GM23248 (cell line): ENCODE measurements at regions of chr11 and their contacts with region 1.

Region 1: GRCh38 chr11:8006349-8006977 is 19.3 kb downstream of the EIF3F start:
- DNase-seq: peak; percentile 84
- H3K4me3 ChIP-seq: no peak overlapping the region
- H3K27ac ChIP-seq: no peak overlapping the region
- H3K4me1 ChIP-seq: peaks cover 5% of the 10 kb centered on the region
- H3K27me3 ChIP-seq: no peaks in the 10 kb centered on the region

Region 2: DNA sequence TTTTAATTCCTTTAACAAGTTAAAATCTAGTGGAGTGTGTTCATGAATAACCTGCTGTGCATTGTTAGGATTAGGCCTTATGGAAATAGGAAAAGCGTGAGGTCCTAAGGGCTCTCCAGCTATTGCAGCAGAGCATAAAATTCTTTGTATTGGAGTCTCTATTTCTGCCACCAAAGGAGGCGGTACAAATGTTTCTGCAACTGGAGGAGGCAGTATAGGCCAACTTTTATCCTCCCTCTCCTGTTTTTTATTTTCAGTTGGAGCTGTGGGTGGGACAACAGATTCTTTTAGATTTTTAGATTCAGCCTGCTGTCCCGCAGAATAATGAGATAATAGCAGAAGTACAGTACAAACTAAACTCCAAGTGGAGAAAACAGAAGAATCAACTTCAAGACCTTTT is 101.5 kb before region 1 on chr11:
- in situ Hi-C with region 1: no loop called
- DNase-seq: peak; percentile 75
- H3K4me3 ChIP-seq: peak overlapping the region; percentile 34
- H3K27ac ChIP-seq: peak overlapping the region; percentile 31
- H3K4me1 ChIP-seq: peaks cover 54% of the 10 kb centered on the region
- H3K27me3 ChIP-seq: no peaks in the 10 kb centered on the region

Region 3: DNA sequence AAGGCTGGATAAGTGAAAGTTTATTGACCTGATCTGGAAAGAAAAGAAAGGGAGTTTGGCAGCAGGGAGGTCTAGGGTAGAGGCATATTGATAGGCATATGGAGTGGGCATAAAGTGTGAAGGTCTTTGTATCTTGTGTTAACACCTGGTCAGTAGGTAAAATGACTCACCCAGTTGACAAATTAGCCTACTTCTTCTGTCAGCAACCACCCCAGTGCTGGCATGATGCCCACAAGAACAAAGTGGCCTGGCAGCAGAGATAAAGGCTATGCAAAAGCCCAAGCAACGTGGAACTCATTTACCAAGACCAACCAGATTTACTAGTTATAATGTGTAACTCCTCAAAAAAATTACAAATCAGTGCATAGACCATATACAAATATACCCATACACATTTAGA is 69.8 kb before region 1 on chr11:
- in situ Hi-C with region 1: no loop called
- DNase-seq: no peak
- H3K4me3 ChIP-seq: no peak overlapping the region
- H3K27ac ChIP-seq: no peak overlapping the region
- H3K4me1 ChIP-seq: no peaks in the 10 kb centered on the region
- H3K27me3 ChIP-seq: no peaks in the 10 kb centered on the region

Region 4: GRCh38 chr11:8099291-8099899 is 92.9 kb after region 1 on chr11:
- in situ Hi-C with region 1: loop called (anchors 5 kb)
- DNase-seq: peak; percentile 76
- H3K4me3 ChIP-seq: no peak overlapping the region
- H3K27ac ChIP-seq: peak overlapping the region; percentile 81
- H3K4me1 ChIP-seq: peaks cover 20% of the 10 kb centered on the region
- H3K27me3 ChIP-seq: no peaks in the 10 kb centered on the region

Region 5: GRCh38 chr11:8566613-8567210 is 560.2 kb after region 1 on chr11:
- in situ Hi-C with region 1: loop called (anchors 25 kb)
- DNase-seq: peak; percentile 59
- H3K4me3 ChIP-seq: no peak overlapping the region
- H3K27ac ChIP-seq: no peak overlapping the region
- H3K4me1 ChIP-seq: peaks cover 9% of the 10 kb centered on the region
- H3K27me3 ChIP-seq: peaks cover 36% of the 10 kb centered on the region